Activated B cell treated with CpG ODN at 0.5 μM for 24 hours (primary cell): ENCODE measurements at regions of chr3 and their contacts with region 1.

Region 1: DNA sequence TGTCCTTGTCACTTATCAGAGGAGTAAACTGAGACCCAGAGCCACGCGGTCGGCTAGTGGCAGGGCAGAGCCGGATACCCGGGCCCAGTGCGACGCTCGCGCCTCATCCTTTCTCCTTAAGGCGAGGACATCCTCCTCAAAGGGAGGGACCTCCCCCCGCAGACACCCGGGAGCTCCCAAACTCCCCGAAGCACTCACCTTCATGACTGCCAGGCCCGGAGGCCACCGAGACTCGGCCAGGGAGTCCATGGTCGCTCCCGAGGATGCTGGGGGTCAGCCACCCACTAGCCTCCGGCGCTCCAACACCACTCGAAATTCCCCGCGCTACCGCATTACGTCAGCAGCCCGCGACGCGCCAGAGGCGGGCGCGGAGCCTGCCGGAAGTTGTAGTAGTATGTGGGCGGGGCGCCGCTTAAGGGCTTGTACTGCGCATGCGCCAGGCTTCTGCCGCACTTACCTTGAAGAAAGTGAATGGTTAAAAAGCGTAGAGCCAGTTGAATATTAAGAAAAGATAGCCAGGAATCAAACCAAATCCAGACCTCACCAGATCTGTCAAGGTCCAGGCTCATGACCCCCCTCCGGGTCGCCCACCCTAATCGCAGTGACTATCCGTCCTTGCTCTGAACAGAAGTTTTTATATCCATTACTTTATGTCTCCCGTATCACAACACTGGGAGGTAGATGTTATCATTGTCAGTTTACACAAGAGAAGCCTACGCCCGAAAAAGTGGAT is at the start of gene RAD18:
- DNase-seq: peak; percentile 91
- ATAC-seq: peak; percentile 96
- H3K4me3 Mint-ChIP-seq: peak within 1 kb of the TSS; percentile 95
- H3K27ac Mint-ChIP-seq: peak within 1 kb of the TSS; percentile 89
- H3K4me1 Mint-ChIP-seq: peaks cover 31% of the 10 kb centered on the region
- H3K27me3 Mint-ChIP-seq: peaks cover 5% of the 10 kb centered on the region
- CTCF ChIP-seq: no peak
- total RNA-seq, gene RAD18: 16.6 and 21.6 TPM in 2 replicates

Region 2: DNA sequence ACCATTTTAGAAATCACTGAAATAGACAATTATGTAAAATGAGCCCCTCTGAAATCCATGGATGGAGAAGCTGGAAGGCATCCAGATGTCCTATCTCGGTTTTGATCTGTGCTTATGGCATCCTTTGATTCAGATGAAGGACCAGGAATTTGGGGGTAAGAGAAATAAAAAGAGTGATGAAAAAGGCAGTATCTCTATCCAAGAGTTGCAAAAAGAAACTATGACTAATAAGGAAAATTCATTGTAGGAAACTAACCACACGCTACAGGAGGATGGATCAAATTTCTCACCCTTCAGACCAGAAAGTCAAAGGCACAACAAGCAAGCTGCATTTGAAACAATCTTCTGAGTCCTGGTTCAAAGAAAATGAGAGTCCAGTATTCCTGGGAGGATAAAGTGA is 251.3 kb after region 1 on chr3:
- CTCF ChIA-PET with region 1: no interaction called
- POLR2A ChIA-PET with region 1: no interaction called
- intact Hi-C with region 1: no loop called
- DNase-seq: no peak
- ATAC-seq: no peak
- H3K4me3 Mint-ChIP-seq: no peak overlapping the region
- H3K27ac Mint-ChIP-seq: no peak overlapping the region
- H3K4me1 Mint-ChIP-seq: no peaks in the 10 kb centered on the region
- H3K27me3 Mint-ChIP-seq: no peaks in the 10 kb centered on the region
- CTCF ChIP-seq: no peak

Region 3: DNA sequence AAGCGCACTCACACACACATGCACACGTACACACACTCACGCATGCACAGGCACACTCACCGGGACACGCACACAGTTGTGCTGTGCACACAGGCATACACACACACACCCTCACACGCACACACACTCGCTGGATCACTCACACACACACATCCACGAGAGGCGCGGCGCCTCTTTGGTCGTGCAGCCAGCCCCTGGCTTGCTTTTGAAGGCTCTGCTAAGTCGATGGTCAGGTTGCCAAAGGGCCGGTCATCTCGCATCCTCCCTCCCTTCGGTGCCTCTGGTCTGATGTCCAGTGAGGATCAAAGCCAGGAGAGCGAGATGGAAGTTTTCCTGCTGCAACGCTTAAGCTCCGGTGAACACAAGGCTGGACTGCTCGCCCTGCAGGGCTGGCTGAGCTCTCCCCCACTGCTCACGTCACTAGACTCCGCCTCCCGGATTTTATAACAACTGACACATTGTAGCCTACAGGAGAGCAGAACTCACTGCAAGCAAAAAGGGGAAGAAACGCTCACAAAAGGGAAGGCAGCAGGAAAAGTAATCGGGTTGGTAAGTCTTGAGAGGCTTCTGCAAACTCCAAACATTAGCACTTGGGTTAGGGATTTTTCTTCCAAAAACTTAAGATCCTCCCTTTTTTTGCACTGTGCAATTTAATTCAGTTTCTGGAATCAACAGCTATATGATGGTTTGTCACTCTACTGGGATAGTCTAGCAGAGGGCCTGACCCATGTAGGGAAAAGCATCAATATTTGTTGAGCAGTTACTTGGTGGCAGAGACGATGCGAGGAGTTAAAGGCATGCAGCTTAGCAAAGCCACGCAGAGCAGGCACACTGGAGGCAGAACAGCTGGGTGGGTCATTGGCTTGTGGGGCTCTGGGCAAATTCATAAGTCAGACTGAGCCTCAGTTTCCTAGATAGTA is 286.2 kb after region 1 on chr3 and contains the start of gene SRGAP3:
- CTCF ChIA-PET with region 1: interaction called, 3 read pairs
- POLR2A ChIA-PET with region 1: no interaction called
- intact Hi-C with region 1: loop called (anchors 5 kb)
- DNase-seq: peak; percentile 60
- ATAC-seq: peak; percentile 100
- H3K4me3 Mint-ChIP-seq: peak within 1 kb of the TSS; percentile 86
- H3K27ac Mint-ChIP-seq: peak within 1 kb of the TSS; percentile 50
- H3K4me1 Mint-ChIP-seq: peaks cover 19% of the 10 kb centered on the region
- H3K27me3 Mint-ChIP-seq: peaks cover 5% of the 10 kb centered on the region
- CTCF ChIP-seq: no peak
- total RNA-seq, gene SRGAP3: 0.20 and 0.58 TPM in 2 replicates

Region 4: GRCh38 chr3:9362731-9363530 is 399.6 kb after region 1 on chr3 and contains the start of gene THUMPD3:
- CTCF ChIA-PET with region 1: no interaction called
- POLR2A ChIA-PET with region 1: no interaction called
- intact Hi-C with region 1: loop called (anchors 1 kb)
- DNase-seq: peak; percentile 92
- ATAC-seq: peak; percentile 96
- H3K4me3 Mint-ChIP-seq: peak within 1 kb of the TSS; percentile 99
- H3K27ac Mint-ChIP-seq: peak within 1 kb of the TSS; percentile 98
- H3K4me1 Mint-ChIP-seq: peaks cover 16% of the 10 kb centered on the region
- H3K27me3 Mint-ChIP-seq: no peaks in the 10 kb centered on the region
- CTCF ChIP-seq: no peak
- total RNA-seq, gene THUMPD3: 34.3 and 42.0 TPM in 2 replicates